GM12878 (cell line): ENCODE measurements at regions of chr3 and their contacts with region 1.

Region 1: GRCh38 chr3:13452490-13453335 is 27.4 kb upstream of the HDAC11 start:
- DNase-seq: peak; percentile 17
- ATAC-seq: peak; percentile 62
- H3K4me3 ChIP-seq: peak overlapping the region; percentile 64
- H3K27ac ChIP-seq: no peak overlapping the region
- H3K4me1 ChIP-seq: peaks cover 4% of the 10 kb centered on the region
- H3K27me3 ChIP-seq: no peaks in the 10 kb centered on the region
- CTCF ChIP-seq: peak; percentile 52 to 75 (median 64)
- EP300 ChIP-seq: no peak
- POLR2A ChIP-seq: no peak
- RAD21 ChIP-seq: peak; percentile 85

Region 2: DNA sequence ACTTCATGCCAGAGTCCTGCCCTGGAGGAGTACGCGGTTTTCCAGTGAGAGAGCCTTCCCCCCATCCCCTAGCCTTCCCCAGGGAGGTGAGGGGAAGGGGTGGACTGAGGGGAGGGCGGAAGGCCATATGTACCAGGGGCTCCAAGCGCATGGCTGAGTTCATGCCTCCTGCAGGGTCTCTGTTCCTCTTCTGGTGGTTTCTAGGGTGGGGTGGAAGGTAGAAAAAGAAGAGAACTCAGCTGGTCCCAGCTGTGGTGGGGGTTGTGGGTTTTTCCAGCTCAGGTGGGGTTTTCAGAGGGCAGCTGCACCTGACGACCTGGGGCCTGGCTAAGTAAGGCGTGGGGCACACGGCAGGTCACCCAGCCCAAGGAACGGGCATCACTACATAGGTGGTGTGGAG is 368.8 kb before region 1 on chr3:
- CTCF ChIA-PET with region 1: interaction called, 146 read pairs
- POLR2A ChIA-PET with region 1: interaction called, 3 read pairs
- RAD21 ChIA-PET with region 1: interaction called, 5 read pairs
- SMC1A ChIA-PET with region 1: interaction called, 3 read pairs
- in situ Hi-C with region 1: loop called (anchors 5 kb)
- intact Hi-C with region 1: no loop called
- DNase-seq: peak; percentile 31
- ATAC-seq: peak; percentile 72
- H3K4me3 ChIP-seq: no peak overlapping the region
- H3K27ac ChIP-seq: 0 out of 2 replicates have a peak overlapping the region, but pooled peaks have one; percentile 22
- H3K4me1 ChIP-seq: peaks cover 52% of the 10 kb centered on the region
- H3K27me3 ChIP-seq: no peaks in the 10 kb centered on the region
- CTCF ChIP-seq: no peak
- EP300 ChIP-seq: no peak
- POLR2A ChIP-seq: no peak
- RAD21 ChIP-seq: no peak

Region 3: DNA sequence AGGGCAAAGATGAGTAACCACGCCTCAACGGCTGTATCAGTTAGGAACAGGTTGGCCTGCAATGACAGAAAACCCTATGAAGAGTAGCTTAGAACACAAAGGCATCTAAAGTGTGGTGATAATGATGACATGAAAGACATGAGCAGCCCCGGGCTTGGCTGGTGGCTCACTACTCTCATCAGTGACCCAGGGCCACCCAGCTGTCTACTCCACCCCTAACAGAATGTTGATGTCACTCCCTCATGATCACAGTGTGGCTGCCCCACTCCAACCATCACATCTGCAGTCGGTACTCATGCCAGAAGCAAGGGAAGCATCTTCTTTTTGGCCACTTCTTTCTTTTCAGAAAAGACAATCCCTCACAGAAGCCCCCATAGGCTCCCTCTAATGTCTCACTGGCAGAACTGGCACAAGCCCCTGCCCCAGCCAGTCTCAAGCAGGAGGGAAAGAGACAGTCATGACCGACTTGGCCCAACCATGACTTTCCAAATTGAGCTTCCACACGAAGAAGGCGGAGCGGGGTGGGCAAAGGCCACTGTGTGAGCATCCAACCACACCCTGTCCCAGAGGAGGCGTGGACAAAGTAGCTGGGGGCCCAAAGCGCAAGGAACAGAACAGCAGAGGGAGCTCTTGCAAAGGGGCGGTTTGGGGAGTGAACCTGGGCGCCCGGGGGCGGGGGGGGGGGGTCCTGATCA is 307.4 kb before region 1 on chr3:
- CTCF ChIA-PET with region 1: interaction called, 16 read pairs
- POLR2A ChIA-PET with region 1: no interaction called
- RAD21 ChIA-PET with region 1: interaction called, 8 read pairs
- SMC1A ChIA-PET with region 1: no interaction called
- in situ Hi-C with region 1: no loop called
- intact Hi-C with region 1: no loop called
- DNase-seq: no peak
- ATAC-seq: 0 out of 3 replicates have a peak, but pooled peaks have one; percentile 34
- H3K4me3 ChIP-seq: no peak overlapping the region
- H3K27ac ChIP-seq: no peak overlapping the region
- H3K4me1 ChIP-seq: no peaks in the 10 kb centered on the region
- H3K27me3 ChIP-seq: peaks cover 0 to under 1% of the 10 kb centered on the region in 2 experiments; a peak in 1 of 4 replicates
- CTCF ChIP-seq: peak in 2 of 3 experiments; percentile 8 to 21; a peak in 1 of 6 replicates
- EP300 ChIP-seq: no peak
- POLR2A ChIP-seq: no peak
- RAD21 ChIP-seq: no peak

Region 4: DNA sequence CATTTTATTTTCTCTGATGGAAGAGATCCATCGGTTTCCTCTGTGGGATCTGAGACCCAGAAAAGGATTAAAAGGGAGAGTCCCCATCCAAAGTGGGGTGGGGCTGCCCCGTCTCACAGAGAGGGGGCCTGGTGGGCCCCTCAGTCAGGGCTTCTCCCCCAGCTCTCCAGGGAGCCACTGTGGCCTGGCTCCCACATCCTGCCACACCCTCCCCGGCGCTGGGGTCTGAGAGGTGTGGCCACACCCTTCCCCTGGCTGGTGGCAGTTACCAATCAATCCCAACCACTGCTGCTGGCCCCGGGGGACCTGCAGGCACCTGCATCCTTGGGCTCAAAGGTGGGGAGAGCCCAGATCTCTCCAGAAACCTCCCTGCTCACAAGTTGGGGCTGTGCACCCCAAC is 217.6 kb before region 1 on chr3:
- CTCF ChIA-PET with region 1: interaction called, 73 read pairs
- POLR2A ChIA-PET with region 1: no interaction called
- RAD21 ChIA-PET with region 1: interaction called, 58 read pairs
- SMC1A ChIA-PET with region 1: interaction called, 37 read pairs
- in situ Hi-C with region 1: no loop called
- intact Hi-C with region 1: loop called (anchors 10 kb)
- DNase-seq: peak; percentile 7
- ATAC-seq: peak; percentile 82
- H3K4me3 ChIP-seq: no peak overlapping the region
- H3K27ac ChIP-seq: no peak overlapping the region
- H3K4me1 ChIP-seq: no peaks in the 10 kb centered on the region; the same call in 1 of the 2 replicates
- H3K27me3 ChIP-seq: no peaks in the 10 kb centered on the region
- CTCF ChIP-seq: no peak
- EP300 ChIP-seq: peak; percentile 26 to 38; a peak in 1 of 4 replicates
- POLR2A ChIP-seq: no peak
- RAD21 ChIP-seq: no peak

Region 5: DNA sequence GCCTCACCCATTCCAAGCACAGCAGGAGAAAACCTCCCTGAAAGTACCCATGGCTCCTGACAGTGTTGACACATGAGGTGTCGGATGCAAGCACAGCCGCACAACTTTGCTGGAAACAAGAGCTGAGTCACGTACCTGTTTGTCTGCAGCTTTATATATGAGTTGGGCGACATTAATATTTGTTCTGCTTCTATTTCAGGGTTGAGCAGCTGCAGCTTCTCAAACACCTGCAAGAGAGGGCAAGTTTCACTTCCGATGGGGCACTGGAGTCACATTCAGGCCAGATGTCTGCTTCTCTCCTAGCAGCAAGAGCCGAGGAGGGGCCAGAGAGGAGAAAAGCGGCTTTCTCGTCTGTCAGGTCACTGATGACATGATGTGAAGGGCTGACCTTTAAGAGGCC is 120.6 kb before region 1 on chr3:
- CTCF ChIA-PET with region 1: interaction called, 23 read pairs
- POLR2A ChIA-PET with region 1: interaction called, 3 read pairs
- RAD21 ChIA-PET with region 1: interaction called, 14 read pairs
- SMC1A ChIA-PET with region 1: interaction called, 21 read pairs
- in situ Hi-C with region 1: no loop called
- intact Hi-C with region 1: no loop called
- DNase-seq: peak; percentile 93
- ATAC-seq: peak; percentile 93
- H3K4me3 ChIP-seq: peak overlapping the region; percentile 43; the same call in 1 of the 2 replicates
- H3K27ac ChIP-seq: peak overlapping the region; percentile 88
- H3K4me1 ChIP-seq: peaks cover 38% of the 10 kb centered on the region
- H3K27me3 ChIP-seq: no peaks in the 10 kb centered on the region
- CTCF ChIP-seq: no peak
- EP300 ChIP-seq: peak; percentile 58 to 93
- POLR2A ChIP-seq: peak; percentile 54
- RAD21 ChIP-seq: no peak

Region 6: DNA sequence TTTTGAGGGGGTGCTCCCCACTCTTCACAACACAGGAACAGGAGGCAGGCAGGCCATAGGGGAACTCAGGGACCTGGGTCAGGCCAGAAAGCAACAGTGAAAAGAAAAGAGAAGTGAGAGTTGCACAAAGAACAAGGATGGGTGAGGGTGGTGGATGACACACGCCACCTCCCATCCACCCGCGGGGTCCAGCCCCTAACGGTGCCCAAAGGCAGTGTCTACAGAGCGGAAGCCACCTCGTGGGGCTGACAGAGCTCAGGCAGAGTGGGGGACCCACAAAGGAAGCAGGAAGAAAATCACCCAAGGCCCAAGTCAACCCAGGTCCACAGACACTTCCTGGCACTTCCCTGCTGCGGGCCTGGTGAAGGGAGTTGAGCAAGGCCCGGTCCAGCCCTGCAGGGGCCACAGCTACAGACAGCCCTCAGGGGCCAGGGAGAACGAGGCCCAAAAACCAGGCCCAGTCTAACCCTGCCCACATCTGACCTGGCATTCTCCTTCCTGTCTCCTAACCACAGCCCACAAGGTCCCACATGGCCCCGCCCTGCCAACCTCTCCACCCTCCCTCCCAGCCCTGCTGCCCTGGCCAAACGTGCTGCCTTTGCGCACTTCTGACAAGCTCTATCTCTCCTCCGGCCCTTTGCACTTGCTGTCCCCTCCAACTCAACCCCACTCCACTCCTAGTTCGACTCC is 38.5 kb before region 1 on chr3:
- CTCF ChIA-PET with region 1: interaction called, 99 read pairs
- POLR2A ChIA-PET with region 1: interaction called, 33 read pairs
- RAD21 ChIA-PET with region 1: interaction called, 66 read pairs
- SMC1A ChIA-PET with region 1: interaction called, 30 read pairs
- in situ Hi-C with region 1: no loop called
- intact Hi-C with region 1: loop called (anchors 1 kb)
- DNase-seq: peak; percentile 89
- ATAC-seq: peak; percentile 89
- H3K4me3 ChIP-seq: peak overlapping the region; percentile 80
- H3K27ac ChIP-seq: peak overlapping the region; percentile 98
- H3K4me1 ChIP-seq: peaks cover 46% of the 10 kb centered on the region
- H3K27me3 ChIP-seq: no peaks in the 10 kb centered on the region
- CTCF ChIP-seq: no peak
- EP300 ChIP-seq: peak; percentile 68 to 89; a peak in 3 of 4 replicates
- POLR2A ChIP-seq: peak; percentile 56
- RAD21 ChIP-seq: no peak

Region 7: DNA sequence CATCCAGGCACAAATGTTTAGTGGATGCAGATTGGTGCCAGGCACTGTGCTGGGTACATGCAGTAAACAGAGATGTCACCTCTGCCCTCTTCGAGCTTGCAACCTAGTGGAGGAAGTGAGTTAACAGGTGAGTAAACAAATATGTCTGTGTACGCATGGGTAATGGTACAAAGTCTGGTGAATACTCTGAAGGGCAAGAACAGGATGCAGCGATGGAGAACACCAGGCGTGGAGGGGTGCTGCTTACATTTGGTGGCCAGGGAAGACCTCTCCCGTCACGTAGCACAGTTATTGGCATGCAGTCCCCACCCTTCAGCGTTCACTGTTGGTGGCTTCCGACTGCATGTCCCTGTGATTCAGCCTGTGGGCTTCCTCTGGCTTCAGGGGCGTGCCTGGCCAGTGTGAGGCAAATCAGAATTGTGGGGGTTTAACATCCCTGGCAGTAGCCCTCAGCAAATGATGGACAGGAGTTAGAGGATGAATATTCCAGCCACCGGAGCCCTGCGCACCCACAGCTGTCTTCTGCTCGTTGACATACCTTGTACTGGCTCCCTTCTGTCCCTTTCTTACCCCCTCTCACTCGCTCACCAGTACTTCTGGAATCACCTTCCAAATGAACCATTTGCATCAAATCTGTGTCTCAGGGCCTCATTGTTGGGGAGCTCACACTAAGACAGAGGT is 18.3 kb after region 1 on chr3:
- CTCF ChIA-PET with region 1: interaction called, 18 read pairs
- POLR2A ChIA-PET with region 1: no interaction called
- RAD21 ChIA-PET with region 1: interaction called, 4 read pairs
- SMC1A ChIA-PET with region 1: interaction called, 6 read pairs
- in situ Hi-C with region 1: no loop called
- intact Hi-C with region 1: no loop called
- DNase-seq: no peak
- ATAC-seq: no peak; the same call in 2 of the 3 replicates
- H3K4me3 ChIP-seq: no peak overlapping the region
- H3K27ac ChIP-seq: no peak overlapping the region
- H3K4me1 ChIP-seq: no peaks in the 10 kb centered on the region
- H3K27me3 ChIP-seq: peaks cover 0 to 3% of the 10 kb centered on the region in 2 experiments; a peak in 2 of 4 replicates
- CTCF ChIP-seq: no peak
- EP300 ChIP-seq: no peak
- POLR2A ChIP-seq: no peak
- RAD21 ChIP-seq: no peak

Region 8: GRCh38 chr3:13507769-13508339 is 55.1 kb after region 1 on chr3:
- CTCF ChIA-PET with region 1: no interaction called
- POLR2A ChIA-PET with region 1: no interaction called
- RAD21 ChIA-PET with region 1: no interaction called
- SMC1A ChIA-PET with region 1: no interaction called
- in situ Hi-C with region 1: no loop called
- intact Hi-C with region 1: no loop called
- DNase-seq: no peak
- ATAC-seq: no peak
- H3K4me3 ChIP-seq: no peak overlapping the region
- H3K27ac ChIP-seq: no peak overlapping the region
- H3K4me1 ChIP-seq: peaks cover 3% of the 10 kb centered on the region; the same call in 1 of the 2 replicates
- H3K27me3 ChIP-seq: no peaks in the 10 kb centered on the region
- CTCF ChIP-seq: no peak
- EP300 ChIP-seq: no peak
- POLR2A ChIP-seq: no peak
- RAD21 ChIP-seq: no peak